Ovary (tissue), 10 donors: ENCODE measurements at regions of chr2 and their contacts with region 1.

Region 1: DNA sequence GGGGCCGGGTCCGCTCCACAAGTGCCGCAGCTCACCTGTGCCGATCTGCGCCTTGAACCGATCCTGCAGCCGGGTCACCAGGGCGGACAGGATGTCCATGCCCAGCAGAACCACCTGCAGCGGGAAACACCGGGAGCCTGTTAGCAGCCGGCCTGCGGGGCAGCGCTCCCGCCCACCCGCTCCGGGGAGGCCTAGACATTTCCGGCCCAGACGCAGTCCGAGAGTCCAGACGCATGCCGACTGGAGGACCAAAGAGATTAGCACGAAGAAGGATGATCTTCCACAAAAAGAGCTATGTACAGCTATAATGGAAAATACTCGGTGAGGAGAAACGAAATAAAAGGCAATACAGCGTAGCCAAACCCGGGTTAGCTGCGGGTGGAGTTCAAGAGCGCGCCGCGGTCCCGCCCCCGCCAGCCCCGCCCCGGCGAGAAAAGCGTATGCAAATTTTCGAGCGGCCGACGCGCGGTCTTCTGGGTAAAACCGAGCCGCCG is 421 bp upstream of the RNU4ATAC start:
- DNase-seq: peak; percentile 79 to 90 (median 84)
- H3K4me3 ChIP-seq: peak overlapping the region; percentile 54
- H3K27ac ChIP-seq: peak overlapping the region; percentile 76 to 97
- H3K4me1 ChIP-seq: peaks cover 3% of the 10 kb centered on the region
- H3K27me3 ChIP-seq: no peaks in the 10 kb centered on the region
- CTCF ChIP-seq: no peak
- EP300 ChIP-seq: no peak
- POLR2A ChIP-seq: no peak

Region 2: DNA sequence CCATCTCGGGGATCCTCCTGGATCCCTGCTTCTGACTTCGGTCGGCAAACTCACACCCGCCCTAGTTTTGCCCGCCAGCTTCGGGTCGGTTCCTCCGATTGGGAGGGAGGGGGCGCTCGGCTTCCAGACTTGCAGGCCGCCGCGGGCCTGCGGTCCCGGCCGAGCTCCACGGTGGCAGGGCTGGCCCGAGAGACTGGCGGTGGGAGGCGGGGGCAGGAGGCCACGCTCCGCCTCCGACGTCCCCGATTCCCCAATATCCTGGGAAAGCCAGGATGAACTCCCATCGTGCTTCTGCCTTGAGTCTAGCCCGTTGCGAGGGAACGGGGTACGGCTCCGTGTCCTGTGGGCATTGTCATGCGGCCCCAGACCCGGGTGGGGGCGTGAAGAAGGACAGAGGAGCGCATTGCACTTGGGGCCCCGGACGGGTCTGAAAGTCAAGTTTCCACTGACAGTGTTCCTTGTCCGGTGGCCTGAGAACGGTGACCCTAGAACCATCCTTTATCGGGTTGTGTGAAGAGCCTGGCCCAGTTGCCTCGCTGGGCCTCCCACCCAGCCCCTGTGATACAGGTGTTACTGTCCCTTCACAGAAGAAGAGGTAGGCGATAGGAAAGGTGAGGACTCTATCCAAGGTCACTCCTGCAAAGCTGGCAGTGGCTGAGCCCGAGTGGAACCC is 1186.7 kb before region 1 on chr2:
- intact Hi-C with region 1: no loop called
- DNase-seq: peak; percentile 65 to 84 (median 79)
- H3K4me3 ChIP-seq: peak overlapping the region; percentile 20
- H3K27ac ChIP-seq: no peak overlapping the region
- H3K4me1 ChIP-seq: peaks cover 10% of the 10 kb centered on the region
- H3K27me3 ChIP-seq: no peaks in the 10 kb centered on the region
- CTCF ChIP-seq: peak; percentile 58 to 90 (median 77)
- EP300 ChIP-seq: no peak
- POLR2A ChIP-seq: no peak

Region 3: DNA sequence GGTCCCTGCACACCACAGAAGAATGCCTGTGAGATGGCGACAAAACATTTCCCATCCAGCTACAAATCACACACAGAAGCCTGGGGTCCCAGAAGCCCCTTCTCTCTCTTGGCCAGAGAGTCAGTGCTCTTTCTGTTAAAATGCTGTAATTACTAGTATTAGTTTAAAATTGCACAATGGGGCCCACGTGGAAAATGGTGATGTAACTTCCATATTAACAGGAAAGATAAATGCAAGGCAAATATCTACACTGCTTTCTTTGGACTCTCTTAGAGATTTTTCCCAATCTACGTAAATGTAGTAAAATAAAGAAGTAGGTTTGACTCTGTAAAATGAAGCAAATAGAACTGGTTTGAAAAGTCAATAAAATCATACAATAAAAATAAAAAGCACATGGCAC is 131.4 kb before region 1 on chr2:
- intact Hi-C with region 1: loop called in 1 of 4 experiments (anchors 10 kb)
- DNase-seq: no peak
- H3K4me3 ChIP-seq: no peak overlapping the region
- H3K27ac ChIP-seq: no peak overlapping the region
- H3K4me1 ChIP-seq: no peaks in the 10 kb centered on the region
- H3K27me3 ChIP-seq: no peaks in the 10 kb centered on the region
- CTCF ChIP-seq: no peak
- EP300 ChIP-seq: no peak
- POLR2A ChIP-seq: no peak

Region 4: DNA sequence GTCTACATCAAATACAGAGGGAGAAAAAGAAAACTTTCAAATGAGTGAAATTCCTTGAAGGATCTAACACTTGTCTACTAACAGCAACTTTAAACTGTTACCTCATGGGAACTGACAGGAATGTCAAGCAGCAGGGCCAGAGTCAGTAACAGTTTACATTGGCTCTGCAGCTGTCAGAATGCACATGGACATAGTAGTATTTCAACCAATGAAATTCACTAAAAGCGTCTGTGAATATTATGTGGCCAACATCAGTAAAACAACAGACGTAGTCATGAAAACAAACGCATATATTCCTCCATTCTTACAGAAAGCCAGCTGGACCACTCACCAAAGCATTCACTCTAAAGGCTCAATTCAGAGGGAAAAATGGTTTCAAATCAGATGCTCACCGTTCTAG is 78.9 kb before region 1 on chr2:
- intact Hi-C with region 1: no loop called
- DNase-seq: no peak
- H3K4me3 ChIP-seq: no peak overlapping the region
- H3K27ac ChIP-seq: no peak overlapping the region
- H3K4me1 ChIP-seq: no peaks in the 10 kb centered on the region
- H3K27me3 ChIP-seq: no peaks in the 10 kb centered on the region
- CTCF ChIP-seq: no peak
- EP300 ChIP-seq: no peak
- POLR2A ChIP-seq: no peak

Region 5: DNA sequence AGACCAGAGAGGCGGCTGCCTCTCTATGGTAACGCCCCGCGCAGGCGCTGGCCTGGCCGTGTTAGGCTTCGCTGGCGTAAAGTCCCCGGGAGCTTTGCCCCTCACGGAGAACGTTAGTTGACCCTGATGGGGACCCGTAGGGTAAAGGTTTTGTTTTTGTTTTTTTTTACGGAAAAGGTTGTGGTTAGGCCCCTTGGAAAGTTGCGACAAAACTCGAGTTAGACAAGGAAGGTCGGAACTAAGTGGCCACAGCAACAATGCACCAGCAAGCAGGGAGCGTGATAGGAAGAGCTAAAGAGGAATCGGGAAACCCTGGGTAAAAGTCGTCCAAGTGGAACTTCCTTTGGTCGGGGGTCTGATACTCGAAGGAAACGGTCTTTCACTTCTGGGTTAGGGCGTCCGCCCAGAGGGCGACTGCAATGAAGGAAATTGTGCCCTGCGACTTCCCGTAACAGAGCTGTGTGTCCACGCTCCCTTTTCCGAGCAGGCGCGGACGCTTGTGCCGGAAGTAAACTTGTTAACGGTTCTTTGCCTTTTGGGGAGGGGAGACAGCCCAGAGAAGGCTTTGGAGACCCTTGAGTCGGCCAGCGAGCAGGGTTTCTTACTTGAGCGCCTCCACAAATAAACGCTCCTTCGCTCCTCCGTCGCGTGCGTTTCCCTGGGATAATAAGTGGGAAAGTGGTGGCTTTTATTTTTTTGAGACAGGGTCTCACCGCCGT is 119.5 kb after region 1 on chr2:
- intact Hi-C with region 1: loop called (anchors 2 to 10 kb)
- DNase-seq: peak; percentile 94 to 97 (median 95)
- H3K4me3 ChIP-seq: peak overlapping the region; percentile 92
- H3K27ac ChIP-seq: peak overlapping the region; percentile 86 to 90
- H3K4me1 ChIP-seq: peaks cover 9% of the 10 kb centered on the region
- H3K27me3 ChIP-seq: no peaks in the 10 kb centered on the region
- CTCF ChIP-seq: peak in 1 of 3 donors; percentile 16
- EP300 ChIP-seq: peak; percentile 23
- POLR2A ChIP-seq: no peak

Region 6: DNA sequence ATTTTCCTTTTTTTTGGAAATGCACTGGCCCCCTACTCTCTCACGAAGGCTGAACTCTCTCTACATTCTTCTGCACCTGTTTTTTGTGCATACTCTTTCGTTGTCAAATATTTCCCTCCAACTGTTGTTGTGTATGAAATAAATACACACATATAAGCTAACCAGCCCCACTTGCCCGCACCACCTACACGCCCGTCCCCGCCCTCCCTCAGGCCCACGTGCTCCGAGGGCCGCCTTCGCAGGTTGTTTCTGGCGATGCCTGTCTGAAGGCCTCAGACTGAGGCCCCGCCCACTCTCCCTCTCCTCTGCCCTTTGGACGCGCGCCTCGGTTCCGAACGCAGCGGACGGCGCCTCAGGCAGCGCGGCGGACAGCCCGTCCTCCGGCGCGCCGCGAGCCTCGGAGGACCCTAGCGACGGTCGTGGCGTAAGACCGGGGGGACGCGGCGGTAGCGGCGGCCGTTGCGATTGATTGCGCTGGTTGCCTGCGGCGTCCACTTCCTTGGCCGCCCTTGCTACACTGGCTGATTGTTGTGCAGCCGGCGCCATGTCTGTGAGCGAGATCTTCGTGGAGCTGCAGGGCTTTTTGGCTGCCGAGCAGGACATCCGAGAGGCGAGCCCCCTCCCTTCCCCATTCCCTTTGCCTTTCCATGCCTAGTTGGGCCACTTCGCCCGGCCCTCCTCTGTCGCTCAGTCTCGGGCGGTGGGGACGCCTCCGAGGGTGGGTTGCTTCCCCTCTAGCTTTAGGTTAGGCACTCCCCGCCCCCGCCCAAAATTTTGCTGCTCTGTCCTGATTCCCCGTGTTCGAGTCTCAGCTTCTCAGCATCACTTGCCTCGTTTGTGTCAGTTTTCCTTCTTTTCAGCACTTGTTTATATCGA is 225.2 kb after region 1 on chr2 and contains the start of gene TSN:
- intact Hi-C with region 1: loop called in 1 of 4 experiments (anchors 10 kb)
- DNase-seq: peak; percentile 96 to 98 (median 98)
- H3K4me3 ChIP-seq: peak within 1 kb of the TSS; percentile 99
- H3K27ac ChIP-seq: peak within 1 kb of the TSS in 1 of 2 donors; percentile 25
- H3K4me1 ChIP-seq: peaks cover 3% of the 10 kb centered on the region
- H3K27me3 ChIP-seq: no peaks in the 10 kb centered on the region
- CTCF ChIP-seq: peak in 2 of 3 donors; percentile 24 to 40
- EP300 ChIP-seq: no peak
- POLR2A ChIP-seq: peak; percentile 34
- total RNA-seq, gene TSN: 28.5 to 64.1 (median 53.7) TPM